Aorta (tissue), 5 donors: ENCODE measurements at regions of chr18 and their contacts with region 1.

Region 1: GRCh38 chr18:34787931-34788532 is 77.9 kb downstream of the DTNA start:
- DNase-seq: no peak
- ATAC-seq: peak; percentile 78
- H3K4me3 ChIP-seq: no peak overlapping the region
- H3K27ac ChIP-seq: no peak overlapping the region
- H3K4me1 ChIP-seq: peaks cover 0 to 2% of the 10 kb centered on the region in 2 donors
- H3K27me3 ChIP-seq: no peaks in the 10 kb centered on the region

Region 2: DNA sequence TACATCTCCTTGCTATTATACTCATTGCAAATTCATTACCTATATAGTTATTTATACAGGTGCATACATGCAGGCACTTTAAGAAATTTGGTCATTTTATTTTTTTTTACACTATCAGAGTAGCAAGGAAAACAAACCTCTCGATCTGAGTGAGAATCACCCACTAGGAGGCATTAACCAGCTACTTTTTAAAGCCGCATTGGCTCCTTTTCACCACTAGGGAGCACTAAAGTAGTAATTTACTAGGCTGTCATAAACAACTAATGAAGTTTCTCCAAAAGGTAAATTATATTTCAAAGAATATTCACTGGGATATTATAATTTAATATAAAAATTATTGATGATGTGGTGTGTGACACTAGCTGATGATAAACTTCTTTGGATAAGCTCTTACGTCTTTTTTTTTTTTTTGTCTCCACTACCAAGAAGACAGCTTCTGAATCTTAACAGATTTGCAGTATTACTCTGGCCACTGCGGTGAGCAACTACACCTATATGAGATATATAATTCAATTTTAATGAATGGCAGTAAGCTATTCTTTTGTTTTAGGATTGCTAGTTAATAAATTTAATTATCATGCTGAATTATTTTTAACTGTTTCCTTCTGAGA is 665.2 kb before region 1 on chr18:
- intact Hi-C with region 1: loop called (anchors 5 kb)
- DNase-seq: no peak
- ATAC-seq: peak; percentile 59
- H3K4me3 ChIP-seq: no peak overlapping the region
- H3K27ac ChIP-seq: no peak overlapping the region
- H3K4me1 ChIP-seq: no peaks in the 10 kb centered on the region
- H3K27me3 ChIP-seq: no peaks in the 10 kb centered on the region

Region 3: DNA sequence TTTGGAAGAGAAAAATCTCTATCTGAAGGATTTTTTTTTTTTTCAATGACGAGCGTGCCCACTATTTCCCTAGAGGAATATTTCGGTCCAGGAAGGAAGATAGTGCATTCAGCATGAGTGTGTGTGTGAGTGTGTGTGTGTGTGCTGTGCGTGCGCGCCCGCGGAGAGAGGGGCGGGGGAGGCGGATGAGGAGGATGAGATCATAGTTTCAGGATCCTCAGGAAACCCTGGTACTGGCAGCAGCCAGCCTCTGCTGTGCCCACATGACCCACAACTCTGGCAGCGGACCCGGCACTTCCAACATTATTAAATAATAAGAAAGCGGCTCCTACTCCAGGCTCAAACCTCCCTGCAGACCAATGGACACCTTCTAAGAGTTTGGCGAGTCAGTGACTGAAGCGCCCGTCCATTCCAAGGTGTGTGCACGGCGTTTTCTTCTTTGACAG is 294.9 kb before region 1 on chr18:
- intact Hi-C with region 1: loop called (anchors 10 kb)
- DNase-seq: peak; percentile 91 to 93
- ATAC-seq: peak; percentile 88
- H3K4me3 ChIP-seq: peak overlapping the region; percentile 95 to 99
- H3K27ac ChIP-seq: peak overlapping the region in 1 of 2 donors; percentile 80
- H3K4me1 ChIP-seq: peaks cover 0 to 2% of the 10 kb centered on the region in 2 donors
- H3K27me3 ChIP-seq: no peaks in the 10 kb centered on the region

Region 4: GRCh38 chr18:34661464-34662111 is 126.4 kb before region 1 on chr18:
- intact Hi-C with region 1: loop called (anchors 5 kb)
- DNase-seq: no peak
- ATAC-seq: peak; percentile 71
- H3K4me3 ChIP-seq: no peak overlapping the region
- H3K27ac ChIP-seq: no peak overlapping the region
- H3K4me1 ChIP-seq: peaks cover 3 to 6% of the 10 kb centered on the region in 2 donors
- H3K27me3 ChIP-seq: no peaks in the 10 kb centered on the region

Region 5: GRCh38 chr18:34837769-34838272 is 49.8 kb after region 1 on chr18:
- intact Hi-C with region 1: no loop called
- DNase-seq: no peak
- ATAC-seq: peak; percentile 51
- H3K4me3 ChIP-seq: no peak overlapping the region
- H3K27ac ChIP-seq: peak overlapping the region; percentile 60 to 78
- H3K4me1 ChIP-seq: peaks cover 5 to 7% of the 10 kb centered on the region in 2 donors
- H3K27me3 ChIP-seq: no peaks in the 10 kb centered on the region

Region 6: DNA sequence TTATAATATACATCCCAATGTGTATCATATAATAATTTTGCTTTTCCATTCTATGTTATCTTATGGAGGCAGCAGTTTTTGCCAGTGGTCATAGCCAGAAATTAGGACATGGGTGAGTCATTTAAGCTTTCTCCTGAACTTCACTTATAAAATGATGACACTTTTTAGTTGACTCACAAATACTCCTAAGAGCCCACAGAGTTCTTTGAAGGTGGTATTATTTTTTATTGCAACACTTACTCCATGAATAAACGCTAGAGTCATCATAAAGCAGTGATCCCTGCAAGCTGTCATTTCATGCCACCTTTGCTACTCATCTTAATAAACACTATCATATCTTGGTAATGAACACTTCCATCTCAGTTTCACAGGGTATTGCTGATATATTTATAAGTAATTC is 183.3 kb after region 1 on chr18:
- intact Hi-C with region 1: no loop called
- DNase-seq: no peak
- ATAC-seq: no peak
- H3K4me3 ChIP-seq: no peak overlapping the region
- H3K27ac ChIP-seq: no peak overlapping the region
- H3K4me1 ChIP-seq: no peaks in the 10 kb centered on the region
- H3K27me3 ChIP-seq: no peaks in the 10 kb centered on the region